Activated CD4-positive, alpha-beta T cell treated with anti-CD3 and anti-CD28 coated beads, Interleukin-2, amount 10 ng/mL, durations not matched to agents 24 days and 14 days (primary cell): ENCODE measurements at regions of chrX and their contacts with region 1.

Region 1: GRCh38 chrX:41703574-41704029 is 14.8 kb downstream of the GPR34 start:
- DNase-seq: no peak
- H3K4me3 Mint-ChIP-seq: no peak overlapping the region
- H3K27ac Mint-ChIP-seq: no peak overlapping the region
- H3K4me1 Mint-ChIP-seq: peaks cover 24% of the 10 kb centered on the region
- H3K27me3 Mint-ChIP-seq: no peaks in the 10 kb centered on the region

Region 2: DNA sequence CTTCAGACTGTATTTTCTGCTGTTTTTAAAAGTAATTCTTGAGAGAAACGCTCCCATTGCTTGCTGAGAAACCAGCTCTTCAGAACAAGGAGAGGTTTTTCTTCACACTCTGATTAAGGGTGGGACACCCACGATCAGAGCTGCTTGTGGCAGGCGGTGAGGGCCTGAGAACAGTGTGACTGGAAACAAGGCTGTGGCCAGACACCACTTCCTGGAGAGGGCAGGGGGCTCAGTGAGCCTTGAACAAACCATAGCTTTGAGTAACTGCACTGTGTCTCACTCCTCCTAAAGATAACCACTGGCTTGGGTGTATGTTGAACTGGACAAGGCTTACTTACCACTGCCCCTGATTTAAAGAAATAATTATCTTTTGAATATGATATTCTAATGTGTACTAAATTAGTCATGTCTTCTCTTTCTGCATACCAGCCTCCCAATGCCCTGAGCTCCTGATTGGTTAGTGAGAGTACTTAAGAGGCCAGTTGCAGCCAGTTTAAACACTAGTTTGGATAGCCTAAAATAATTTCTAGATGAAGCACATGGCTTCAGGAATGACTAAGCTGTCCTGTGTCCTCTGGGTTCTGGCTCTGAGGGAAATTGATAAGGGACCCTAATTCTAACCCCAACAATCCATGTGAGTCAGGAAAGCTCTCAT is 16.6 kb after region 1 on chrX:
- intact Hi-C with region 1: loop called (anchors 2 kb)
- DNase-seq: peak; percentile 76
- H3K4me3 Mint-ChIP-seq: no peak overlapping the region
- H3K27ac Mint-ChIP-seq: no peak overlapping the region
- H3K4me1 Mint-ChIP-seq: peaks cover 26% of the 10 kb centered on the region
- H3K27me3 Mint-ChIP-seq: no peaks in the 10 kb centered on the region

Region 3: GRCh38 chrX:42195511-42195910 is 491.9 kb after region 1 on chrX:
- intact Hi-C with region 1: no loop called
- DNase-seq: no peak
- H3K4me3 Mint-ChIP-seq: no peak overlapping the region
- H3K27ac Mint-ChIP-seq: no peak overlapping the region
- H3K4me1 Mint-ChIP-seq: no peaks in the 10 kb centered on the region
- H3K27me3 Mint-ChIP-seq: no peaks in the 10 kb centered on the region